ENCODE measurements at regions of chr9 and their contacts with region 1.

Region 1: DNA sequence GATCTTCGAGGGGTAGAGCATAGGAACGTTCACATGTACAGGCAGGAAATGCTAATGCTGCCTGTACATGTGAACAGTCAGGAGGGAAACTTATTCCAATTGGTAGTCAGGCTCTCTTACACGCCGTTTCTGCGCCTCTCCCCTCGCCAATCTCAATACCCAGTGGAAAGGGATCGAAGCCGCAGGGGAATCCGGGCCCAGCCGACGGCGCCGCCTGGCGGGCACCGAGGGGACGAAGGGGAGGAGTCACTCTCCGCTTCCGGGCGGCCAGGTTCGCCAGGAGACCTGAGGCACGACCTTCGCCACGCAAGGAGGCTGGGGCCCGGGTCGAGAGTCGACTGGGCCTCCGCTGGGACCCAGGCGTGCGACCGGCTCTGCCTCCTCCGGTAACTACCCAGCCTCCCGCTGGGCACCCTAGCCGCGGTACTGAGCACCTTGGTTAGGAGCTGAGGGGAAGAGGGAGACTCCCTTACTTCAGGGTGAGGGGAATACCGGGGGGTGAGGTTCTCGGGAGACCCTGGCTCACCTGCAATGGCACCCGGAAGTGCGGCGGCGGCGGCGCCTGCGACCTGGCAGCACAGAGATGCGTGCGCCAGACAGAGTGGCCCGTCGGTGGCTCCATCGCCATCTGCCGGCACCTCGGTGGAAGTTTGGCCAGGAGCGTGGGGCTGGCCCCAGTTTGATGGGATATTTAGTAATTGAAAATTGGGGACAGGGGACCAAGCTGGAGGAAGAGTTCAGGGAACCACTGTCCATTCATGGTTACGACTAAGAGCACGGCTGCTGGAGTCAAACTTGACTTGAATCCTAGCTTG is at the start of gene PIGO:
- DNase-seq: peak; percentile 89
- CTCF ChIP-seq: peak; percentile 96

Region 2: GRCh38 chr9:34994260-34994899 is 101.9 kb before region 1 on chr9:
- CTCF ChIA-PET with region 1: interaction called, 17 read pairs
- POLR2A ChIA-PET with region 1: no interaction called
- DNase-seq: no peak
- CTCF ChIP-seq: peak; percentile 38

Region 3: DNA sequence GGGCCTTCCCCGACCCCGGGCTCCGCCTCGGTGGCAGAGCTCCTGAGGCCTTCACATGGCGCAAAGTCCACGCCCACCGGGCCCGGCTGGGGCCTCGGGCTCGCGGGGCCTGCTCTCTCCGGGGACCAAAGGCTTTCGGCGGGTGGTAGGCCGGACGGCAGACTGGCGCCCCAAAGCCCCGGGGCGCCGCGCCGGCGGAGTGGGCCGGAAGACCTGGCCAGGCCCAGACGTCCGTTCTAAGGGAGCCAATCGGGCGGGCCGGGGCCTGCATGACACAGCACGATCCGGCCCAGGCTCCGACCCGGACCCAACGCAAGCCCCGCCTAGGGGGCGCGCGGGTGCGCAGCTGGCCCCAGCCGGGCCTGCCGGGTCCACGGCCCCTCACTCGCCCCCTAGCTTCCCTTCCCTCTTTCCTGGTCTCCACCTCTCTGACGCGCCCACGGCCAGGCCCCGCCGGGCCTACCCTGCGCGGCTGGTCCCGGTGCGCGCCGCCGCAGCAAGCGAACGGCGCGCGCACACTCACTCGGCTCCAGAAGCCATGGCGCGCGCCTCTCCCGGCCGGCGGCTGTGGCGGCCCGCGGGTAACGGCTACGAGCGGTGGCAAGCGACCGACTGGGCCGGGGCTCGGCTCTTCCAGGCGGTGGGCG is 24.3 kb before region 1 on chr9:
- CTCF ChIA-PET with region 1: interaction called, 177 read pairs
- POLR2A ChIA-PET with region 1: interaction called, 6 read pairs
- DNase-seq: peak; percentile 85
- CTCF ChIP-seq: peak; percentile 41

Region 4: GRCh38 chr9:35111001-35111933 is 15.0 kb after region 1 on chr9:
- CTCF ChIA-PET with region 1: interaction called, 28 read pairs
- POLR2A ChIA-PET with region 1: no interaction called
- DNase-seq: peak; percentile 96
- CTCF ChIP-seq: no peak